ENCODE measurements at regions of chr4 and their contacts with region 1.

Region 1: GRCh38 chr4:13654158-13654797 is 26.8 kb upstream of the BOD1L1 start:
- DNase-seq: peak; percentile 66 to 89
- H3K4me3 ChIP-seq: peak overlapping the region; percentile 33
- H3K4me1 ChIP-seq: no peaks in the 10 kb centered on the region
- H3K27me3 ChIP-seq: peaks cover 20% of the 10 kb centered on the region

Region 2: DNA sequence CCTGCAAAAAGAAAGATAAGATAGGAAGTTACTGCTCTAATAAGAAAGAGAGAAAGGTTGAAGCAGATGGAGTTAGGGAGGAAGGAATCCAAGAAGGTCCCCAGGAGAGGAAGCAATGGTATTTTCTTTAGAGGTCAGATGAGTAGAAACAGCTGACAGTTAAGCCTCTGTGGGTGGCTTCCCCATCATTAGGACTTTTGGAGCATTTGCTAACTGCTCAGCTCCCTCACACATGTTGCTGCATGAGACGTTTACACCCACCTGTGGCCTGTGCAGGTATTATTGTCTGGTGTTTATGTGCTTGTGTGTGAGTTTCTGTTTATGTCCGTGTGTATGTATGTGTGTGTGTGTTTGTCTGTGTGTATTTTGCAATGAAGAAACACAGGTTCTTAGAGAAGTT is 516.9 kb before region 1 on chr4:
- in situ Hi-C with region 1: no loop called
- DNase-seq: no peak
- H3K4me3 ChIP-seq: no peak overlapping the region
- H3K4me1 ChIP-seq: no peaks in the 10 kb centered on the region
- H3K27me3 ChIP-seq: no peaks in the 10 kb centered on the region

Region 3: GRCh38 chr4:15457406-15458201 is 1803.3 kb after region 1 on chr4:
- in situ Hi-C with region 1: loop called (anchors 25 kb)
- DNase-seq: peak in 1 of 2 experiments; percentile 55
- H3K4me3 ChIP-seq: no peak overlapping the region
- H3K4me1 ChIP-seq: no peaks in the 10 kb centered on the region
- H3K27me3 ChIP-seq: no peaks in the 10 kb centered on the region

Measured in HAP-1 (cell line).